Right ventricle myocardium inferior (tissue), 1 donor: ENCODE measurements at regions of chr3 and their contacts with region 1.

Region 1: GRCh38 chr3:188947401-188948280 is 224.1 kb upstream of the TPRG1 start:
- DNase-seq: peak; percentile 92
- ATAC-seq: peak; percentile 89

Region 2: GRCh38 chr3:188037216-188037718 is 910.4 kb before region 1 on chr3:
- intact Hi-C with region 1: loop called (anchors 5 kb)
- DNase-seq: no peak
- ATAC-seq: peak; percentile 81

Region 3: DNA sequence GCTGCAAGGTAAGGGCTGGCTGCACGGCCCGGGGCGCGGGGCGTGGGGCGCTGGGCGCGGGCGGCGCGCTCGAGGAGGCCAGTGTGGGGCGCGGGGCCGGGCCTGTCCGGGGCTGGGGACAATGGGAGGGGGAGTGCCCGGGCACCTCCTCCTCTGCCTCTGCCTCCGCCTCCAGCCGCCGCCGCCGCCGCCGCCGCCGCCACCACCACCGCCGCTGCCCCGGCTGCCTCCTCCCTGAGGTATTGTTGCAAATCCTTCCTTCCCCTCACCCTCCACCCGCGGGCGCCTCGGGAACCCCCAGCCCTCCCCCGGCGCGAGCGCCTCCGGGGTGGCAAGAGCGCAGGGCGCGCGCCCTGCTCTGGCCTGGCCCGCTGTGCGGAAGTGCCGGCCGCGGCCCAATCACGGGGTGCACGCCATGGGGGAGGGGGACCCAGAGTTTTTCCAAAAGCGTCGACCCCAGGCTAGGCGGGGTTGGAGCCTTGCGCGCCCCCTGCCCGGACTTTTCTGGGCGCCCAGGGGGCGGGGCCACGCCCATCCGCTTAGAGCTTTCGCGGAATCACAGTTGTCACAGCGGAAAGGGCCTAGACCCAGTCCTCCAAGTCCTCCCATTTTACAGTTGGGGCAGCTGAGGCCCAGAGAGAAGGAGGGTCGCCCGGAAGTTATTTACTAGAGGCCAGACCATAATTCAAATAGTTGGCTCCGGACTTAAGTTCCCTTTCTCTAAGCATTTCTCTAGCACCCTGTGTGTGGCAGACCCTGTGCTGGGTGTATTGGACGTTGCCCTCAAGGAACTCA is 793.4 kb before region 1 on chr3 and contains the start of gene LPP:
- intact Hi-C with region 1: loop called (anchors 5 kb)
- DNase-seq: peak; percentile 93
- ATAC-seq: peak; percentile 93
- total RNA-seq, gene LPP: 114 TPM

Region 4: DNA sequence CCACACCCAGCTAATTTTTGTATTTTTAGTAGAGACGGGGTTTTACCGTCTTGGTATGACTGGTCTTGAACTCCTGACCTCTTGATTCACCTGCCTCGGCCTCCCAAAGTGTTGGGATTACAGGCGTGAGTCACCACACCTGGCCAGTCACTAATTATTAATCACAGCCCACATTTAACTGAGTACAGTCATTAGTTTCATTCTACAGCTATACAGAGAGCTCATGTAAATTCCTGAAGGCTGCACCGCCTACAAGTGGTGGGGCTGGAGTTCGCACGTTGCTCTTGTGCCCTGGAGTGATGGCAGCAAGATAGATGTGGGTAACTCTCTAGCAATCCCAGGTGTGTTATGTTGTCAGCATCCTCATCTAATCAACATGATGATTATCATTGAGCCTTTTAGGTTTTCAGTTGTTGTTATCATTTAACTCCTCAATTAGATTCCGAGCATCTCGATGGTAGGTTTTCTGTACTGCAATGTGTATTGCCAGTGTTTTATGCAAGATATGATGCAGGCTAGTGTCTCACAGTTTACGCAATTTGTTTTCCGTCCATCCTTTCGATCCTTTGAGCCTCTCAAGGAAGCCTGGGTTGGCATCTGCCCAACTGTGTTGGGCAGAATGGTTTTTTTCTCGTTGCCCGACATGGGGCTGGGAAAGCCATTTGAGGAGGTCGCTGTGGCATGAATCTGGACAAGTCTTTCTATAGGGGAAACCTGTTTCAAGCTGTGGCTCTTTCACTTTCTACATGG is 577.4 kb before region 1 on chr3:
- intact Hi-C with region 1: no loop called
- DNase-seq: no peak
- ATAC-seq: no peak

Region 5: GRCh38 chr3:188389711-188390342 is 557.8 kb before region 1 on chr3:
- intact Hi-C with region 1: loop called (anchors 5 kb)
- DNase-seq: no peak
- ATAC-seq: peak; percentile 79

Region 6: DNA sequence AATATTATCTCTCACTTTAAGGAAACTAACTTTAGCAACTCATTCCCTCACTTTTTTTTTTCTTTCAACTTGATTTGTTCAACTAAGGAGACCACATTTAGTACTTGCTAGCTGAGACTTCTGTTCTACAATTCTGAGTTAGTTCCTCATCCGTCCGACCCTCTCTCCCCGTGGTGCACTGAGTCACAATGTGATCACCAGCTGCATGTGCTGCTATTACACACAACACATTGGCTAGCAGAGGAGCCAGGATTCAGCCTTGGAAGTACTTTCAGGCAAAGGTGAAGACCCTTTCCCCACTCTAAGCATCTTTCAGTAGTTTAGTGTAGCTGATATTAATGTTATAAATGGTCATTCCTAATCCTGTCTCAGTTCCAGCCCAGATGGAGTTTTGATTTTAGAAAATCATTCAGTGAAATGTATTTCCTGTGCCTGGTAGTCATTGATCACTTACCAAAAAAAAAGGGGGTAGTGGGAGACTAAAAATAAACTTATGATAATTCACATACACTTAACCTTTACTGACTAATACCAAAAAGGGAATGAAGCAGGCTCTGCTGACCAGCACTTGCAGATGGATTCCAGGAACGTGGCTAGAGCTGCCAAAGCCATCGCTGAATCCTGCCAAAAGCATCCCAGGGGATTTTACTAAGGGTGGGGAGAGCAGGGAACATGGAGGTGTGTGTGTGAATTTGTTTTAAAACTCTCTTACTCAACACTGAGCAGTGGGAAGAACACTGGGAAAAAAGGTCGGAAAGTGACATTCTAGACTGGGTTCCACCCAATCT is 368.9 kb before region 1 on chr3:
- intact Hi-C with region 1: loop called (anchors 5 kb)
- DNase-seq: peak; percentile 70
- ATAC-seq: peak; percentile 94

Region 7: GRCh38 chr3:188889054-188889491 is 58.6 kb before region 1 on chr3:
- intact Hi-C with region 1: loop called (anchors 5 kb)
- DNase-seq: no peak
- ATAC-seq: peak; percentile 83